ENCODE measurements at regions of chr6 and their contacts with region 1.

Region 1: GRCh38 chr6:63571881-63572732 is at the starts of genes LOC128125822 and PTP4A1:
- DNase-seq: peak; percentile 98
- H3K4me3 Mint-ChIP-seq: peak within 1 kb of the TSS; percentile 95
- H3K27ac Mint-ChIP-seq: peak within 1 kb of the TSS; percentile 96
- H3K4me1 Mint-ChIP-seq: peaks cover 32% of the 10 kb centered on the region
- H3K27me3 Mint-ChIP-seq: no peaks in the 10 kb centered on the region
- total RNA-seq, gene PTP4A1: 45.1 to 49.3 TPM

Region 2: DNA sequence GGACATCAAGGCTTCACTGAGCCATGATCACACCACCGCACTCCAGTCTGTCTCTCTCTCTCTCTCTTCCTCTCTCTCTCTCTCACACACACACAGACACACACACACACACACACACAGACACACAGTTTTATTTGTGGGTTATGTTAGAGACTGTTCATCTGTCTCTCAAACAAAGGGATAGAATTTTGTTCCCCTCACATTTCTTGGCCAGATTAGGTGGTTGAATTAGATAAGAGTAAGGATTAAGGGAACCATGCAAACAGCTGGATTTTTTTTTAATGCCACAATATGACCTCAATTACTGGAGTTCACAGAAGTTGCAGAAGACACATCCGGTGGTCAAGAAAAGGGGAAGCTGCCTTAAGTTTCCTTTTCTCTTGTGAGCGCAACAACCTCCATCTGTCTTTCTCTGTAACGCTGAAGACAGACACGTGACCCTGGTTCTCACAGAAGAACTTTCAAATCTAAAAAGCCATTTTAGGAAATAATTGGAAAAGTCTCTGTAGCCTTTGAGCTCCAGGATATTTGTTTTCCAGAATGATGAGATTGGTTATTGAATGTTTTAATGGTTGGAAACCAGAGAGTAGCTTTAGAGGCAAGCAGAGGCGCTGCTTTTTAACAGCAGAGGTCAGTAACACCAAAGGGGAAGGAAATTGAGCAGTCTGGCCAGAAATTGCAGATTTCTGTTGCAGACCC is 219.4 kb before region 1 on chr6:
- CTCF ChIA-PET with region 1: interaction called, 3 read pairs
- POLR2A ChIA-PET with region 1: no interaction called
- intact Hi-C with region 1: loop called (anchors 1 kb)
- DNase-seq: no peak
- H3K4me3 Mint-ChIP-seq: no peak overlapping the region
- H3K27ac Mint-ChIP-seq: no peak overlapping the region
- H3K4me1 Mint-ChIP-seq: peaks cover 7% of the 10 kb centered on the region
- H3K27me3 Mint-ChIP-seq: peaks cover 4% of the 10 kb centered on the region

Region 3: DNA sequence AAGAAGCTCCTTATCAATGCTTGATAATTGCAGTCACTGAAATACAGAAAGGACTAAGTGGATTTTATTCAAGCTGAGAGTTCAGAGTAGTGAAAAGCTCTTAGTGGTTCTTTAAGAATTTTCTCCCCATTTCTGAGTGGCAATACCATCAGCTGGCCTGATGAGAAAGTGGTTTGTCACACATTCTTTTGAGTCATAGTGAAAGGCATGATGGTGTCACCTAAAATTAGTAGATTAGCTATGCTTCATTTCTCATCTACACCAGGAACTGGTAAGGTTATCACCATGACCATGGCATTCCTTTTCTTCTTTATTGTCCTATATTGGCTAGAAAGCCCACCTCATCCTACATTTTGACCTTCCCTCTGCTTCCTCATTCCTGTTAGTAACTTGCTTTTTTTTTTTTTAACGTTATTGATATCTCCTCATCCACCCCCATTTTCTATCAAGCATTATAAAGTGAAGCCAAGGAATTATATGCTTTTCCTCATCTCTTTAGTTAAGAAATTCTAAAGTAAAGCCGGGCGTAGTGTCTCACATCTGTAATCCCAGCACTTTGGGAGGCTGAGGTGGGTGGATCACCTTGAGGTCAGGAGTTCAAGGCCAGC is 67.2 kb before region 1 on chr6:
- CTCF ChIA-PET with region 1: no interaction called
- POLR2A ChIA-PET with region 1: no interaction called
- intact Hi-C with region 1: loop called (anchors 2 kb)
- DNase-seq: no peak
- H3K4me3 Mint-ChIP-seq: no peak overlapping the region
- H3K27ac Mint-ChIP-seq: no peak overlapping the region
- H3K4me1 Mint-ChIP-seq: no peaks in the 10 kb centered on the region
- H3K27me3 Mint-ChIP-seq: no peaks in the 10 kb centered on the region

Region 4: DNA sequence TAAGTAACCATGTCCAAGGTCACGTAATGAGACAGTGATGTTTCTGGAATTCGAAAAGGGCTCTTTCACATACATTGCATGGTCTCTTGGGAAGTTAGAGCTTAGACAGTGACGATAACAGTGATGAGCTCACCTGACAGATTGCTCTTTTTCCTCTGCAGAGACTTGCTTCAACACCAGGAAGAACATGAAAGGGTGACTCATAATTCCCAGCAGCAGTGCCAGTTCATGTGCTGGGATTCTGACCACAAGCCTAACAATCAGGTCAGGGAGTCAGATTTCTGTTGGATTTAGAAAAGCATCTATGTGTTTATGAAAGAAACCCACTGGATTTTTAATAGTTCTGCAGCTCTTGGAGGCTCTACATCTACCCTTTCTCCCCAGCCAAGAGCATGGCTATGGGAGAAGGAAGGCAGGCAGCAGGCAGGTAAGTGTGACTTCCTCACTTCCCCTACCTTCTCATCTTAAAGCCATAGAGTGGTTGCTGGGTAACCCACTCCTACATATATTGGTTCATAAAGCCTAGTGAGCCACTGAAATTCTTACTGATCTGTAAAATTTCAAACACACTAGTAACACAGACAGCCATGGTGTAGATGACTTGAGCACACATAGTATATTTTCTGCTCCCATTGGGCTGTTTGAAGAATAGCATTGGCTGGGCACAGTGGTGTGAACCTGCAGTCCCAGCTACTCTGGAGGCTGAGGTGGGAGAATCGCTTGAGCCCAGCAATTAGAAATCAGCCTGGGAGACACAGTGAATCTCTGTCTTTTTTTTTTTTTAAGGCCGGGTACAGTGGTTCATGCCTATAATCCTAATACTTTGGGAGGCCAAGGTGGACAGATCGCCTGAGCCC is 44.2 kb before region 1 on chr6:
- CTCF ChIA-PET with region 1: no interaction called
- POLR2A ChIA-PET with region 1: no interaction called
- intact Hi-C with region 1: loop called (anchors 1 kb)
- DNase-seq: no peak
- H3K4me3 Mint-ChIP-seq: no peak overlapping the region
- H3K27ac Mint-ChIP-seq: no peak overlapping the region
- H3K4me1 Mint-ChIP-seq: peaks cover 13% of the 10 kb centered on the region
- H3K27me3 Mint-ChIP-seq: no peaks in the 10 kb centered on the region

Region 5: DNA sequence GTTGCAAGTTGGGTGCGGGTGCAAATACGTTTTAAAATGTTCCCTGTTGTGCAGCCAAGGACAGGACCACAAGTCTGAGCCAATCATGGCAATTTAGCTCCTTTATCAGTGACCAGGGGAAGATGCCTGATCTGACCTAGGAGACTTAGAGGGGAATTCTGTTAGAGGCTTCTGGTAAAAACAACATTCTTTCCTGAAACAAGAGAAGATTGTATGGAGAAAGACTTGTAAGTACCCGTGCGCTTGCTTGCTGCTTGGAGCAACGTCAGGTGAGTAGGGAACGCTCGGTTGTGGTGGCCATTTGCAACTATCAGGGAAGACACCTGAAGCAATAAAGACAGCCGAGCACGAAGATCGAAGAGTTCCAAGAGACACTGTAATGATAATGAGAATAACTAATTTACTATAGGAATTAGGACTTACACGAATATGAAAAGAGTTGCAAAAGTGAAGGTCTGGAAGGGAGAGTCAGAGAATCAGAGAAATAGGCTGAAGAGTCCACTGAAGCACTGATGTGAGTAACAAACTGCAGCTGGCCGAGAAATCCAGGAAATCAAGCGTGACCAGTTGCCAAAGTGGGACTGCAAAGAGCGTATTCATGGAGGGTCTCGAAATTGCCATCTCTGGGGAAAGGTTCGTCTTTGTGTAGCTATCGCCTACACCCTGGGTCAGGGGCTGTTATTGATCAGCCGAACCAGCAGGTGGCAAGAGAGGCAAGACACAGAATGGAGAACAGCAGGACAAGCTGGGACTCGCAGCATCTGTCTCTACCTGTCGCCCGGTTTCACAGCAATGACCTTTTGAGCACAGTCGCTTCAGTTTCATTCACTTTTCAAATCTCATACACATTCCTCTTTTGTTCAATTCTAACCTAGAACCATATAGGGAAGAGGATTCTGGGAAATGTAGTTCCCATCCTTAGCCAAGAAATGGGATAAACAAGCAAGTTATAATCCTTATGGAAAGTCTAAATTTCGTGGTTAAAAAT is 26.2 kb after region 1 on chr6:
- CTCF ChIA-PET with region 1: interaction called, 24 read pairs
- POLR2A ChIA-PET with region 1: interaction called, 5 read pairs
- intact Hi-C with region 1: loop called (anchors 1 kb)
- DNase-seq: peak; percentile 82
- H3K4me3 Mint-ChIP-seq: peak overlapping the region; percentile 77
- H3K27ac Mint-ChIP-seq: no peak overlapping the region
- H3K4me1 Mint-ChIP-seq: peaks cover 16% of the 10 kb centered on the region
- H3K27me3 Mint-ChIP-seq: no peaks in the 10 kb centered on the region

Region 6: DNA sequence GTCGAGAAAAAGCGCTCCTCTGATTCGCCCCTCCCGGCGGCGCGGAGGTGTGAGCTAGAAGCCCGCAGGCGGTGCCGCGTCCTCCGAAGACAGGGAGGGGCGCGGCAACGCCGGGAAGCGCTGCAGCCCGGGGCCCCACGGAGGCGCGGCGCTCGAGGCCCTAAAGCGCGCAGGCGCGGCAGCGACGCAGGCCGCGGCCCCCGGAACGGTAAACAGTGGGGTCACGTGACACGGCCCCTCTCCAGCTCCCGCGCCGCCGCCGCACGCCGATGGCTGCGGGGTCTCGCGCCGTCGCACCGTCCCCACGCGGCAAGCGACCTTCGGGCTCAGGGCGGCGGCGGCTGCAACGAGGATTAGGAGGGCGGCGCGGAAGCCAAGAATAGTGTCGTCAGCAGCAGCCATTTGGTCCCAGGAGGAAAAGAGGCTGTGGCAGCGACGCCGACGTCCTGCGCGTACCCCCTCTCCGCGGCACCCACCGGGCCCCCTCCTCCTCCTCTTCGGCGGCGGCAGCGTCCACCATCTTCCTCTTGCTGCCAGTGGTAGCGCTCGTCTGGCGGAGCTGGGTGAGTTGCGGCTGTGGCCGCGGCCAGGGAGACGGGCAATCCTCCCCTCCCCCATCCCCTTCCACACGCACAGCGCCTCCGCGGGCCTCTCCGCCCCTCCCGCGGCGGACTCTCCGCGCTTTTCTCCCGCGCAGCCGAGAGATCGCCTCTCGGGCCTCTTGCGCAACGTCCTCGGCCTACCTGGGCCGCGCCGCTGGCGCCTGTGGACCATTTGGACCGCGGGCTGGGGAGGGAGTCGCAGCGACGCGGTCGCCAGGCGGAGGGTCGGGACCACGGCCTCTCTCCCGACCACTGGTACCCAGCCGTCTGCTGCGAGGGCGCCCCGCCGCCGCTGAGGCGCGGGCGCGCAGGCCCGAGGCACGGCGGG is 63.7 kb after region 1 on chr6 and contains the start of gene PHF3:
- CTCF ChIA-PET with region 1: interaction called, 19 read pairs
- POLR2A ChIA-PET with region 1: interaction called, 5 read pairs
- intact Hi-C with region 1: loop called (anchors 1 kb)
- DNase-seq: peak; percentile 93
- H3K4me3 Mint-ChIP-seq: peak within 1 kb of the TSS; percentile 98
- H3K27ac Mint-ChIP-seq: peak within 1 kb of the TSS; percentile 96
- H3K4me1 Mint-ChIP-seq: peaks cover 45% of the 10 kb centered on the region
- H3K27me3 Mint-ChIP-seq: no peaks in the 10 kb centered on the region
- total RNA-seq, gene PHF3: 43.0 to 43.2 TPM

Region 7: GRCh38 chr6:63764318-63764916 is 192.3 kb after region 1 on chr6:
- CTCF ChIA-PET with region 1: interaction called, 11 read pairs
- POLR2A ChIA-PET with region 1: no interaction called
- intact Hi-C with region 1: loop called (anchors 1 kb)
- DNase-seq: no peak
- H3K4me3 Mint-ChIP-seq: no peak overlapping the region
- H3K27ac Mint-ChIP-seq: no peak overlapping the region
- H3K4me1 Mint-ChIP-seq: no peaks in the 10 kb centered on the region
- H3K27me3 Mint-ChIP-seq: peaks cover 6% of the 10 kb centered on the region

Measured in activated CD4-positive, alpha-beta memory T cell treated with anti-CD3 and anti-CD28 coated beads for 36 hours (primary cell).